ENCODE measurements at regions of chr10 and their contacts with region 1.

Region 1: GRCh38 chr10:91381257-91381891 is 28.8 kb upstream of the HECTD2 start:
- DNase-seq: peak; percentile 36 to 61 (median 45)
- ATAC-seq: peak; percentile 89 to 93
- H3K4me3 ChIP-seq: no peak overlapping the region
- H3K27ac ChIP-seq: peak overlapping the region; percentile 47
- H3K4me1 ChIP-seq: no peaks in the 10 kb centered on the region
- H3K27me3 ChIP-seq: no peaks in the 10 kb centered on the region

Region 2: GRCh38 chr10:91123246-91123645 is 258.1 kb before region 1 on chr10:
- intact Hi-C with region 1: no loop called
- DNase-seq: no peak
- ATAC-seq: no peak
- H3K4me3 ChIP-seq: no peak overlapping the region
- H3K27ac ChIP-seq: no peak overlapping the region
- H3K4me1 ChIP-seq: no peaks in the 10 kb centered on the region
- H3K27me3 ChIP-seq: no peaks in the 10 kb centered on the region

Region 3: GRCh38 chr10:91298224-91298871 is 83.0 kb before region 1 on chr10:
- intact Hi-C with region 1: loop called in 3 of 4 experiments (anchors 2 to 10 kb)
- DNase-seq: peak; percentile 71 to 88 (median 86)
- ATAC-seq: peak; percentile 90 to 93
- H3K4me3 ChIP-seq: peak overlapping the region; percentile 36
- H3K27ac ChIP-seq: peak overlapping the region; percentile 1
- H3K4me1 ChIP-seq: no peaks in the 10 kb centered on the region
- H3K27me3 ChIP-seq: no peaks in the 10 kb centered on the region

Region 4: GRCh38 chr10:91496016-91496415 is 114.6 kb after region 1 on chr10:
- intact Hi-C with region 1: no loop called
- DNase-seq: no peak
- ATAC-seq: no peak
- H3K4me3 ChIP-seq: no peak overlapping the region
- H3K27ac ChIP-seq: no peak overlapping the region
- H3K4me1 ChIP-seq: no peaks in the 10 kb centered on the region
- H3K27me3 ChIP-seq: no peaks in the 10 kb centered on the region